ENCODE measurements at regions of chr20 and their contacts with region 1.

Region 1: GRCh38 chr20:63309261-63310071 is 16.5 kb downstream of the COL20A1 start:
- DNase-seq: peak; percentile 45 to 58
- ATAC-seq: peak; percentile 55 to 86; a peak in 5 of 6 replicates
- H3K4me3 ChIP-seq: no peak overlapping the region
- H3K27ac ChIP-seq: no peak overlapping the region
- H3K4me1 ChIP-seq: 0 out of 3 replicates have a peak, but pooled peaks cover 3% of the 10 kb centered on the region
- CTCF ChIP-seq: peak; percentile 72
- EP300 ChIP-seq: no peak
- POLR2A ChIP-seq: no peak
- RAD21 ChIP-seq: peak; percentile 71 to 73

Region 2: DNA sequence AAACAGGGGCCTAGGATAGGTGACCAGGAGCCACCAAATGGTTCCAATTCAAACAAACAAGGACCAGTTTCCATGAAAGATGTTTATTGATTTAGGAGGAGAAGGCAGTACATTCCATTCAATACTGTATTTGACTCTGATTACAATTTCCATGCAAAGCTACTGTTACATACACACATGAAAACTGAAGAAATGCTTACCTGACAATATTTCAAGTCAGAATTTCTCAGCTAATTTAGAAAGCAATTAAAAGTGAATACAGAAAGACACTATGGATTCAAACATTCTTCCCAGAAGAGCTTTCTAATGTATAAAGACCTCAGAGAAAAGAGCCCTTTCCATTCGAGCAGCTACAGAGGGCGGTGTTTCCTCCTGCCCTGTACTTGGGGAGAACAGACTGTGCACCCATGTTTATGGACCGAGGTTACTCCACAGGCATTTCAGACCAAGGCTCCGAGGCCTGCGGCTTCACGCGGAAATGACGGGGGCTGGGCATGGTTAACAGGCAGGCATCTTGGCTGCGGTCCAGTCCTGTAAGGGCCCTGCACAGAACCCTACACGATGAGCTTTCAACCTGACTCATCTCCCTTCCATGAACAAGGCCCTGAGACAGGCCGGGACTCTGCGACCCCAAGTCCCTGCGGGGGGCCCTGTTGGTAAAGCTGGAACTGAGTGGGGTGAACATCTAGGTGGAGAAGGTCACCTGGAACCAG is 422.2 kb before region 1 on chr20:
- CTCF ChIA-PET with region 1: no interaction called
- POLR2A ChIA-PET with region 1: no interaction called
- DNase-seq: no peak
- ATAC-seq: peak in 1 of 2 experiments; percentile 24; a peak in 2 of 6 replicates
- H3K4me3 ChIP-seq: no peak overlapping the region
- H3K27ac ChIP-seq: no peak overlapping the region
- H3K4me1 ChIP-seq: no peaks in the 10 kb centered on the region
- CTCF ChIP-seq: no peak
- EP300 ChIP-seq: no peak
- POLR2A ChIP-seq: no peak
- RAD21 ChIP-seq: no peak

Region 3: GRCh38 chr20:63280929-63281545 is 28.4 kb before region 1 on chr20:
- CTCF ChIA-PET with region 1: interaction called, 31 read pairs
- POLR2A ChIA-PET with region 1: no interaction called
- DNase-seq: peak; percentile 48 to 49
- ATAC-seq: peak; percentile 46 to 83; a peak in 4 of 6 replicates
- H3K4me3 ChIP-seq: no peak overlapping the region
- H3K27ac ChIP-seq: no peak overlapping the region
- H3K4me1 ChIP-seq: no peaks in the 10 kb centered on the region
- CTCF ChIP-seq: peak; percentile 36
- EP300 ChIP-seq: no peak
- POLR2A ChIP-seq: no peak
- RAD21 ChIP-seq: peak; percentile 30 to 51; a peak in 1 of 5 replicates

Region 4: GRCh38 chr20:63321136-63321831 is 11.8 kb after region 1 on chr20:
- CTCF ChIA-PET with region 1: interaction called, 31 read pairs
- POLR2A ChIA-PET with region 1: no interaction called
- DNase-seq: no peak
- ATAC-seq: peak; percentile 15 to 24; a peak in 3 of 6 replicates
- H3K4me3 ChIP-seq: no peak overlapping the region
- H3K27ac ChIP-seq: no peak overlapping the region
- H3K4me1 ChIP-seq: peaks cover 6% of the 10 kb centered on the region; the same call in 2 of the 3 replicates
- CTCF ChIP-seq: no peak
- EP300 ChIP-seq: no peak
- POLR2A ChIP-seq: no peak
- RAD21 ChIP-seq: no peak

Region 5: DNA sequence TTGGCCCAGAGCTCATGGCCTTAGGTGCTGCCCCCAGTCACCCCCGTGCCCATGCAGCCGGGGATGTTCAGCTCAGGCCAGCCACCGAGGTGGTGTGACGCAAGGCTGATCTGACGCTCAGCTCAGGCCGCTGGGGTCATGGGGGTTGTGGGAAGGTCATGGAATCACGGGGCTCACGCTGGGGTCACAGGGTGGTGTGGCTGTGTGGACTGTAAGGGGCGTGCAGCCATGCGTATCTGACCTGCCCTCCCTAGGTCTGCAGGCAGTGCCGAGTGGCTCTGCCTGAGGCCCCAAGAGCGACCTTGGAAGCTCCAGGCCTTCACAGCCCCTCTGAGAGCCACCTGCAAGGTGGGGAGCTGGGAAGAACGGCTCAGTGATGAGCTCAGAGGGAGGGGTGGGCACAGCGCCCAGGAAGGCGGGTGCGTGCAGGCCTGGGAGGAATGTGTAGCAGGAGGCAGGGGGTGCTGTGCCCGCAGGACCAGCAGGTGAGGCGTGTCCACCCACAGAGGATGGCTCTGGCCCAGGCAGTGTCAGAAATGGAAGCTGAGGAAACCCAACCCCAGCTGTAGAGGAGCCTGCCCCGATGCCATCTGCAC is 23.9 kb after region 1 on chr20:
- CTCF ChIA-PET with region 1: interaction called, 20 read pairs
- POLR2A ChIA-PET with region 1: no interaction called
- DNase-seq: no peak
- ATAC-seq: no peak
- H3K4me3 ChIP-seq: no peak overlapping the region
- H3K27ac ChIP-seq: no peak overlapping the region
- H3K4me1 ChIP-seq: no peaks in the 10 kb centered on the region
- CTCF ChIP-seq: no peak
- EP300 ChIP-seq: no peak
- POLR2A ChIP-seq: no peak
- RAD21 ChIP-seq: no peak

Region 6: DNA sequence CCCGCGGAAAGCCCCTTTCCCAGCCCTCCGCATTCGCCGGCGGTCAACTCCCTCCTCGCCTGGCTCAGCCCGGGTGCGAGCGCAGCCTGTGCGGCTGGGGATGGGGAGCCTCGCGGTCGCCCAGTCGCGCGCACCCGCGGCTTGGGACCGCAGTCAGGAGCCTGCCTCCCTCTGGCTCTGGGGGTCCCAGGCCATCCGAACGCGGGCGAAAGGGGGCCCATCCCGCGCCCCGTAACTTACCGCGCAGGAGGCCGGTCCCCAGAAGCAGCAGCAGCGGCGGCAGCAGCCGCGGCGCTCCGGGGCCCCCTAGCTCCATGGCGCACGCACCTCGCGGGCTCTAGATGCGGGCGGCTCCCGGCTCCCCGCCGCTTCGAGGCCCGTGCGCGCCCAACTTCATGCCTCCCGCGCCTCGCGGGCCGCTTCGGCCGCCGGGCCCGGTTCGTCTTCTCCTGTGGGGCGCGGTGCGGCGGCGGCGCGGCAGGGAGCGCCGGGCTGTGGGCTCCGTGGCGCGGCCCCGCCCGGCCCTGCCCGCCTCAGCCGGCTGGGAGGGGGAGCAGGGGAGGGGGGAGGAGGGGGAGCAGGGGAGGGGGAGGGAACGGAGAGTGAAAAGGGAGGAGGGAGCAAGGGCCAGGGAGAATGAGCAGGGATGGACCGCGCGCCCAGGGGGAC is 51.5 kb after region 1 on chr20 and contains the start of gene CHRNA4:
- CTCF ChIA-PET with region 1: interaction called, 21 read pairs
- POLR2A ChIA-PET with region 1: no interaction called
- DNase-seq: peak in 1 of 2 experiments; percentile 38
- ATAC-seq: peak in 1 of 2 experiments; percentile 29; a peak in 3 of 6 replicates
- H3K4me3 ChIP-seq: peak within 1 kb of the TSS; percentile 36
- H3K27ac ChIP-seq: peak within 1 kb of the TSS in 1 of 2 experiments; percentile 57; a peak in 3 of 6 replicates
- H3K4me1 ChIP-seq: 0 out of 3 replicates have a peak, but pooled peaks cover 4% of the 10 kb centered on the region
- CTCF ChIP-seq: no peak
- EP300 ChIP-seq: no peak
- POLR2A ChIP-seq: no peak
- RAD21 ChIP-seq: no peak
- polyA plus RNA-seq, gene CHRNA4: 0.03 and 0.09 TPM in 2 replicates

Region 7: DNA sequence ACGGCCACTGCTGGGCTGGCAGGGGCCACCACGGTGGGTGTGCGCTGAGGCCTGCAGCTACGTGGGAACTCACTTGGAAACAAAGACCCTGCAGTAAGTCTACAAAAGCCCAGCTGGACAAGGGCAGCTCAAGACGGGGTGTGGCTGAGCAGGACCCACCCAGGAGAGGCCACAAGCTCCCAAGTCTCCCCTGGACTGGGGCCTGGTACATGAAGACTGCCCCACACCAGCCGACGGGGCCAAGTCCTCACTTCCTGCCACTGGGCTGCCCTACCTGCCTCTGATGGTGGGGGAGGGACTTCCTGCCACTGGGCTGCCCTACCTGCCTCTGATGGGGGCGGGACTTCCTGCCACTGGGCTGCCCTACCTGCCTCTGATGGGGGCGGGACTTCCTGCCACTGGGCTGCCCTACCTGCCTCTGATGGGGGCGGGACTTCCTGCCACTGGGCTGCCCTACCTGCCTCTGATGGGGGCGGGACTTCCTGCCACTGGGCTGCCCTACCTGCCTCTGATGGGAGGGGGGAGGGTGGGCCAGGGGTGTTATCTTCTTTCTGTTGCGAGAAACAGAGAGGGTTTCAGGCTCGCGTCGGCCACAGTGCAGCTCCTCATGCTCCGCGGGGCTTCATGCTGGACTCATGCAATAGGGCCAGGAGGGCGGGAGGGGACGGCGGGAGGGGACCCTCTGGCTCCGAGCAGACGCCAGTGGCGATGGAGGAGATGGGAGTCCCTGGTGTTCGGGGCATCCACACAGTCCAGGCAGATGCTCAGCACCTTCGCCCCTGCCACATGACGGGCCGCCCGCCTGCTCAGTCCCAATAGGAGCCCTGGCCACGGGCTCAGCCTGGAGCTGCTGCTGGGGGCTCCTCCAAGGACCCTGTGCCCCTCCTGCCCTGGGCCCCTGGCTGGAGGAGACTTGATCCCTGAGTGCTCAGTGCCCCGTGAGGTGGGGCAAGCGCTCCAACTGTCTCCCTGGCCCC is 100.3 kb after region 1 on chr20:
- CTCF ChIA-PET with region 1: interaction called, 10 read pairs
- POLR2A ChIA-PET with region 1: no interaction called
- DNase-seq: no peak
- ATAC-seq: no peak
- H3K4me3 ChIP-seq: no peak overlapping the region
- H3K27ac ChIP-seq: no peak overlapping the region
- H3K4me1 ChIP-seq: no peaks in the 10 kb centered on the region
- CTCF ChIP-seq: no peak
- EP300 ChIP-seq: no peak
- POLR2A ChIP-seq: no peak
- RAD21 ChIP-seq: no peak

Measured in A549 (cell line).